SK-N-SH (cell line): ENCODE measurements at regions of chr15 and their contacts with region 1.

Region 1: GRCh38 chr15:73697033-73697467 is 12.9 kb downstream of the CD276 start:
- DNase-seq: peak; percentile 84
- H3K4me3 ChIP-seq: peak overlapping the region in 1 of 2 experiments; percentile 13; a peak in 1 of 4 replicates
- H3K27ac ChIP-seq: peak overlapping the region; percentile 58 to 69
- H3K4me1 ChIP-seq: peaks cover 9 to 20% of the 10 kb centered on the region in 2 experiments; a peak in 2 of 4 replicates
- H3K27me3 ChIP-seq: no peaks in the 10 kb centered on the region
- CTCF ChIP-seq: no peak
- EP300 ChIP-seq: peak; percentile 35 to 54; a peak in 1 of 4 replicates
- RAD21 ChIP-seq: 0 out of 2 replicates have a peak, but pooled peaks have one; percentile 1

Region 2: DNA sequence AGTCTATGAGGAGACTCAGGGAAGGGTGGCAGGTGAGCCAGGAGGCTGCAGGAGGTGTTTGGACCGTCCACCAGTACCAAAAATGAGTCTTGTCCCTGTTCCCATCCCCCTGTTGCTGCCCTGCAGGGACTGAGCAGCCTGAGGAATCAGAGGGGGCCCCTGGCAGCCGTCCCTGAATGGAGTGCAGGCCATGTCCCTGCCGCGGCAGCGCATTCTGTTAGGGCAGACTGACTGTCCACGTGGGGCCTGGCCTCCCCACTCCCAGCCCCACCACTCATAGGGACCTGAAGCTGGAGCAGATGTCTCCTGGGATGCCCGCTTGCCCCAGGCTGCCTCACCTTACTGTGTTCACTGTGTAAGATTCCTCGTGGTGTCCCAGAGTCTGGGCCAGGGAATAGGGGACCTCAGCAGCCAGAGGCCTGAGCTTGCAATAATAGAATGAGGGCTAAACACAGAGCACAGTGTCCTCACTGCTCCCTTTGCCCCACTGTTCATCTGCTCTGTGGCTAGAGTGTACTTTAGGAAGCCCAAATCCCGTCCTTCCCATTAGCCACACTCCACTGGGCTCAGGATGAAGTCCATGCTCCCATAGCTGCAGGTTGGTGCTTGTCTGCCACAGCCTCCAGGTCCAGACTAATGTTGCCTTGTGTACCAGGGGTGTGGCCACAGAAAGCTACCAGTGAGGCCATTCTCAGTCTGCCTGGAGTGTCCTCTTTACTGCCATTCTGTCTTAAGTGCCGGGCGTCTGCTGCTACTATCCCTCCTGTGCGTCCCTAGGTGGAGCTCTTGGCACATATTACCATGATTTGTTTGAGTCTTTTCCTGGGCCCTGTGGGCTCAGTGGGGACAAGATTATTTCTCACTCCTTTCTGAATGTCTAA is 391.5 kb before region 1 on chr15:
- CTCF ChIA-PET with region 1: interaction called, 26 read pairs
- POLR2A ChIA-PET with region 1: no interaction called
- DNase-seq: peak; percentile 79
- H3K4me3 ChIP-seq: no peak overlapping the region; a peak in 1 of 4 replicates
- H3K27ac ChIP-seq: no peak overlapping the region; a peak in 1 of 4 replicates
- H3K4me1 ChIP-seq: peaks cover 0 to 8% of the 10 kb centered on the region in 2 experiments; a peak in 1 of 4 replicates
- H3K27me3 ChIP-seq: no peaks in the 10 kb centered on the region
- CTCF ChIP-seq: peak; percentile 62
- EP300 ChIP-seq: no peak
- RAD21 ChIP-seq: peak; percentile 90

Region 3: DNA sequence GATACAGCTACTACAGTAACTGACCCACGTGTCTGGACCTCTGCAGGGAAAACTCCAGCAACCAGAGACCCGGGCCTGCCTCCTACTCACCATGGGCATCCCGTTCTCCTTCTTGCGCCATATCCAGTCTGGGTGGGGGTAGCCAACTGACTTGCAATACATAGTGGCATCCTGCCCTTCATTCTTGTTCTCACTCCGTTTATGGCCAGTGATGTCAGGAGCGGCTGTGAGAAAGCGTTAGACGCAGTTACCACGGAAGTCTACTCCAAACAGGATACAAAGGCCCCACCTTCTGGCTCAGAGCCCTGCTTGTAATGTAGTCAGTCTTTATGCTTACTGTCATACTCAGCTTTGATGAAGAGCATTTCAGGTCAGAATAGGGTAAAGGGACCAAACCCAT is 123.5 kb before region 1 on chr15:
- CTCF ChIA-PET with region 1: interaction called, 10 read pairs
- POLR2A ChIA-PET with region 1: no interaction called
- DNase-seq: no peak
- H3K4me3 ChIP-seq: no peak overlapping the region
- H3K27ac ChIP-seq: no peak overlapping the region
- H3K4me1 ChIP-seq: peaks cover 0 to 2% of the 10 kb centered on the region in 2 experiments; a peak in 1 of 4 replicates
- H3K27me3 ChIP-seq: no peaks in the 10 kb centered on the region
- CTCF ChIP-seq: no peak
- EP300 ChIP-seq: no peak
- RAD21 ChIP-seq: no peak

Region 4: GRCh38 chr15:73639464-73640188 is 57.4 kb before region 1 on chr15:
- CTCF ChIA-PET with region 1: interaction called, 256 read pairs
- POLR2A ChIA-PET with region 1: no interaction called
- DNase-seq: no peak
- H3K4me3 ChIP-seq: no peak overlapping the region
- H3K27ac ChIP-seq: no peak overlapping the region
- H3K4me1 ChIP-seq: no peaks in the 10 kb centered on the region
- H3K27me3 ChIP-seq: no peaks in the 10 kb centered on the region
- CTCF ChIP-seq: no peak
- EP300 ChIP-seq: no peak
- RAD21 ChIP-seq: no peak

Region 5: DNA sequence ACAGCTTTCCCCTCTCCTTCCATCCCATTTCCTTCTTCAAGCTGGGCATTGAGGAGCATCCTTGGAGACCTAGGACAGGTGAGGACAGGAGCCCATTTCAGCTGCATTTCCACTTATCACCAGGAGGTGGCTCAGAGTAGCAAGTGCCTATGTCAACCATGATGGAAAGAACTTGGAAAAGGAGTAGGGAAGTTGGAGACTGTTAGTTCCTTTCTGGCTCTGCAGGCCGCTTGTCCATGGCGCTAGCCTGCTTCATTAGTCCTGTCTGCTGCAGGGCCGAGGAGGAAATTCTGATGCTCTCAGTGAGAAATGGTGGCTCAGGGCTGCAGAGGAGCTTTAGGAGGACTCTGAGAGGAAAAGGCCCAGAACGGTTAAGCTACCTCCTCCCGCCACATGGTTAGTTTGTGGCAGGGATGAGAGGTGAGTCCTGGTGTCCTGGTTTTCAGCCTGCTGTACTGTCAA is 19.9 kb before region 1 on chr15:
- CTCF ChIA-PET with region 1: interaction called, 418 read pairs
- POLR2A ChIA-PET with region 1: no interaction called
- DNase-seq: peak; percentile 60
- H3K4me3 ChIP-seq: no peak overlapping the region
- H3K27ac ChIP-seq: no peak overlapping the region
- H3K4me1 ChIP-seq: no peaks in the 10 kb centered on the region
- H3K27me3 ChIP-seq: peaks cover 22% of the 10 kb centered on the region
- CTCF ChIP-seq: peak; percentile 81
- EP300 ChIP-seq: no peak
- RAD21 ChIP-seq: peak; percentile 73

Region 6: DNA sequence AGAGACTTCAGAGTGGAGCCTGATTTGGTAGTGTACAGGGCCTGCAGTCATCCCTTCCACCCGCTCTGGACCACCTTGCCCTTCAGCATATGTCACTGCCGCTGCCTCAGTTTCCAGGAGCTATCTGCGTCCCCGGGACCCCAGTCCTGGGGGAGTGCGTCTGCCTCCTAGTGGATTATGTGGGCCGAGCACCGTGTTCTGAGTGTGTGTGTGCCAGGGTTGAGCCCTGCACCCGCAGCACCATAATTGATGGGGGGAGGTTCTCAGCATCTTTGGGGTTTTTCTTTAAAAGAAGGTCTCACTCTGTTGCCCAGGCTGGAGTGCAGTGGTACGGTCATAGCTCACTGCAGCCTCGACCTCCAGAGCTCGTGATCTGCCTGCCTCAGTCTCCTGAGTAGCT is 20.8 kb after region 1 on chr15:
- CTCF ChIA-PET with region 1: interaction called, 26 read pairs
- POLR2A ChIA-PET with region 1: no interaction called
- DNase-seq: no peak
- H3K4me3 ChIP-seq: no peak overlapping the region
- H3K27ac ChIP-seq: no peak overlapping the region
- H3K4me1 ChIP-seq: peaks cover 0 to 4% of the 10 kb centered on the region in 2 experiments; a peak in 1 of 4 replicates
- H3K27me3 ChIP-seq: no peaks in the 10 kb centered on the region
- CTCF ChIP-seq: peak; percentile 26
- EP300 ChIP-seq: no peak
- RAD21 ChIP-seq: no peak

Region 7: DNA sequence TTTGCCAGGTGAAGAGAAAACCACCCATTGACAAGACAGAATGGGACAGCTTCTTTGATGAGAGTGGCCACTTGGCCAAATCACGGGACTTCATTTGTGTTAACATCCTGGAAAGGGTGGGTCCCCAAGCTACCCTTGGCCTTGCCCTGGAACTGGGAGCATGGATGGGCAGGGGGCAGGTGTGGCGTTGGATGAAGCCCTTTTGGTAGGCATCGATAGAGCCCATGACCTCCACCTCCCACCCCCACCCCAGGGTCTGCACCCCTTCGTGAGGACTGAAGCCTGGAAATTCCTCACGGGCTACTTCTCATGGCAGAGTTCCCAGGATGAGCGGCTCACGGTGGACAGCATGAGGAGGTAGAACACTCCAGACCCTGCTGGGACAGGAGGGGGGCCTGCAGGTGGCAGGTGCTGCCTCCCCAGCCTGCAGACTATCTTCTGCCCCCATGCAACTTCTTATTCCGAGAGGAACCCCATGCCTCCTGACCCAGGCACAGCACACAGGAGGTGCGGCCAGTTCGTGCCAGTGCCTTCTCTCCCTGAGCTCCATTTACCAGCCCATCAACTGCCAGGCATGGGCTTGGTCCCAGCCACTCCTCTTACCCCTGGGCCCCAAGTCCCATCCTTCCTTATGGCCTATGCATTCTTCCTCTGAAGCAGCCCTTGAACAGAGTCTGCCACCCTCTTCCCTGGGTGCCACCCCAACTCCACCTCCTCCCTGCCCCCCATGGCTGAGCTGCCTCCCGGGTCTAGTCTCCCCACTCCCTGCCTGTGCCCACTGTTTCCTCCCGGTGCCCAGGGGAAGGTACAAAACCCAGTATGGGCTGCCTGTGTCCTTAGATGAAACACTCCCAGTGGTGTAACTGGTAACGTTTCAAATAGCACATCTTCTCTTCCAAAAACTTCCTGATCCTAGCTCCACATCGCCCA is 184.6 kb after region 1 on chr15:
- CTCF ChIA-PET with region 1: no interaction called
- POLR2A ChIA-PET with region 1: no interaction called
- DNase-seq: no peak
- H3K4me3 ChIP-seq: no peak overlapping the region
- H3K27ac ChIP-seq: no peak overlapping the region
- H3K4me1 ChIP-seq: no peaks in the 10 kb centered on the region
- H3K27me3 ChIP-seq: peaks cover 5% of the 10 kb centered on the region; the same call in 1 of the 2 replicates
- CTCF ChIP-seq: no peak
- EP300 ChIP-seq: no peak
- RAD21 ChIP-seq: no peak

Region 8: GRCh38 chr15:74573987-74574386 is 876.9 kb after region 1 on chr15:
- CTCF ChIA-PET with region 1: no interaction called
- POLR2A ChIA-PET with region 1: no interaction called
- DNase-seq: no peak
- H3K4me3 ChIP-seq: no peak overlapping the region
- H3K27ac ChIP-seq: no peak overlapping the region
- H3K4me1 ChIP-seq: peaks cover 4 to 32% of the 10 kb centered on the region in 2 experiments; a peak in 3 of 4 replicates
- H3K27me3 ChIP-seq: no peaks in the 10 kb centered on the region
- CTCF ChIP-seq: no peak
- EP300 ChIP-seq: no peak
- RAD21 ChIP-seq: no peak